ENCODE measurements at regions of chr3 and their contacts with region 1.

Region 1: DNA sequence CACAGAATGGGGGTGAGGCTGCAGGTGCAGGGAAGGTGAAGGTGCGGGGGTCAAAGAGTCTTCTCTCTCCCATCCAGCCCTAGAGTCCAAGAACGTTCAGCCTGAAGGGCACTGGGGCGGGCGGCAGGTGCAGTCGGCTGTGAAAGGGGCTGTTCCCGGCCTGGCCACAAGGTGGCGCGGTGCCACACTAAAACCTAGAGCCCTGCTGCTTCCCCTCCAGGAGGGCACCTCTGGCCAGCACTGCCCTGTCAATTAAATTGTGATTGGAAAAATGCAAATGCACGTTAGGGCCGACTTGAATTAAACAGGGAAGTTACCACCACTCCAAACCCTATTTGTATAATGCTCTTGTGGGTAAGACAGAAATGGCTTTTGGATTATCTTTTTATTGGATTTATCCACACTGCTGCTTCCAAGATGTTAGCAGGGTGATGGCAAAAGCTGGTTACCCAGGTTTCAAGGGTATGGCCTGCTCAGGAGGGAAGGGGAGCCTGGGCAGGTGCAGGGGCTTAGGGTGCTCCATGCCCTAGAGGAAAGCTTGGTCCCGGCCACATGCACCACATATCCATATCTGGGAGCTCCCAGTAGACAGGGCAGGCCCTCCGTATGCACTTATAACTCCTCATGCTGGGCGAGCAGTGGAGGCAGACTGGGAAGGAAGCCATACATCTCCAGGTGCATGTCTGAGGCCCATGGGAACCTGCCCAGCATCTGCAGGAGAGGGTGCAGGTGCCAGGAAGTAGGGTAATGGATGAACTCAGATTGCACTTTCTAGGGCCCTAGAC is 119.8 kb downstream of the ADCY5 start:
- DNase-seq: peak; percentile 85
- H3K4me3 Mint-ChIP-seq: no peak overlapping the region
- H3K27ac Mint-ChIP-seq: no peak overlapping the region
- H3K4me1 Mint-ChIP-seq: no peaks in the 10 kb centered on the region
- H3K27me3 Mint-ChIP-seq: peaks cover 53% of the 10 kb centered on the region
- CTCF ChIP-seq: peak; percentile 83

Region 2: GRCh38 chr3:123019591-123019990 is 309.5 kb before region 1 on chr3:
- CTCF ChIA-PET with region 1: no interaction called
- intact Hi-C with region 1: no loop called
- DNase-seq: no peak
- H3K4me3 Mint-ChIP-seq: no peak overlapping the region
- H3K27ac Mint-ChIP-seq: no peak overlapping the region
- H3K4me1 Mint-ChIP-seq: no peaks in the 10 kb centered on the region
- H3K27me3 Mint-ChIP-seq: peaks cover 81% of the 10 kb centered on the region
- CTCF ChIP-seq: no peak

Region 3: DNA sequence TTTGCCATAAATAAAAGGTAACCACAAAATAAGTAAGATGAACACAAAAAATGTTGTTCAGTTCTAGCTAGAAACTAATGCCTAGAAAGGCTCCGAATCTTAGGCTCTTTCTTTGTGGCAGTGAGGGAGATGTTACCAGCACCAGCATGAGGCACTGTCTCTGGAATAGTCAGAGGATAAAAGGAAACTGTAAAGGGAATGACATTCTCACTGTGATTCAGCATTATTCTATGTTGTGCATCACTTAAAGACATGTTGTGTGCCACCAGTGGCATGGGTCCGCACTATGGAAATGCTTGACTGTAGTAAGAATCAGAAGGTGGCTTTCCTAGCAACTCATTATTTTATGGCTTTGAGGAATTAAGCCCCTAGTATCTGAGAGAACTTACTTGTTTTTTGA is 56.5 kb before region 1 on chr3:
- CTCF ChIA-PET with region 1: no interaction called
- intact Hi-C with region 1: no loop called
- DNase-seq: no peak
- H3K4me3 Mint-ChIP-seq: no peak overlapping the region
- H3K27ac Mint-ChIP-seq: no peak overlapping the region
- H3K4me1 Mint-ChIP-seq: peaks cover 21% of the 10 kb centered on the region
- H3K27me3 Mint-ChIP-seq: no peaks in the 10 kb centered on the region
- CTCF ChIP-seq: no peak

Region 4: DNA sequence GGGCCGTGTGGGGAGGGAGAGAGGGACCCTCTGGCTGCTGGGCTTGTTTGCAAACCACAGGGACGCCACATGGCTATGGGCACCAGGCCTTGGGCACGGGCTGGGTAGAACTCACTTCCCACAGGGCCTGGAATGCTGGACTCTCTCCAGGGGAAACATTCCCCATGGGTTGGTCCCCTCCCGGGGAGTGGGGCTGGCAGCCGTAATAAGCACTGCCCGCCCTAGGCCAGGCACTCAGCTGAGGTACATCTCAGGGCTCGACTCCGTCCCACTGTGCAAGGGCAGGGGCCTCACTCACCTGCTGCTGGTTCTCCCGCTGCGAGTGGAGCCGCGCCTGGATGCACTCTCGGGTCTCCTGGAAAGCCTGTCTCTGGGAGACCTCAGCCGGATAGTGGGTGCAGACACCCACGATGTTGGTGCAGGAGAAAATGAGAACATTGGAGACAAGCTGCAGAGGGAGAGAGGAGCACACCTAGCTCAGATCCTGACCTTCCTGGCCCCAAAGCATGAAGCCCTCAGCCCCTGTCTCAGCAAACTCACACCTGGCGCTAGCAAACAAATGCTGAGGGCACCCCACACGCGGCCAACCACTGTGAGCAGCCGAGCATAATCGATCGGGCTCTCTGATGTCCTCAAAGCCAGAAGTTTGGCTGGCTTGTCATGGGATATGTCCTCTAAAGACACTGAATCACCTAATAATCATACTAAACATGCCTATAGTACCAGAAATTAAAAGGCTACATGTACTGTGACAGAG is 23.3 kb after region 1 on chr3:
- CTCF ChIA-PET with region 1: no interaction called
- intact Hi-C with region 1: no loop called
- DNase-seq: no peak
- H3K4me3 Mint-ChIP-seq: no peak overlapping the region
- H3K27ac Mint-ChIP-seq: no peak overlapping the region
- H3K4me1 Mint-ChIP-seq: no peaks in the 10 kb centered on the region
- H3K27me3 Mint-ChIP-seq: peaks cover 68% of the 10 kb centered on the region
- CTCF ChIP-seq: no peak

Region 5: GRCh38 chr3:123489400-123490004 is 160.5 kb after region 1 on chr3:
- CTCF ChIA-PET with region 1: interaction called, 14 read pairs
- intact Hi-C with region 1: loop called (anchors 1 kb)
- DNase-seq: peak; percentile 78
- H3K4me3 Mint-ChIP-seq: no peak overlapping the region
- H3K27ac Mint-ChIP-seq: no peak overlapping the region
- H3K4me1 Mint-ChIP-seq: no peaks in the 10 kb centered on the region
- H3K27me3 Mint-ChIP-seq: no peaks in the 10 kb centered on the region
- CTCF ChIP-seq: peak; percentile 76

Region 6: DNA sequence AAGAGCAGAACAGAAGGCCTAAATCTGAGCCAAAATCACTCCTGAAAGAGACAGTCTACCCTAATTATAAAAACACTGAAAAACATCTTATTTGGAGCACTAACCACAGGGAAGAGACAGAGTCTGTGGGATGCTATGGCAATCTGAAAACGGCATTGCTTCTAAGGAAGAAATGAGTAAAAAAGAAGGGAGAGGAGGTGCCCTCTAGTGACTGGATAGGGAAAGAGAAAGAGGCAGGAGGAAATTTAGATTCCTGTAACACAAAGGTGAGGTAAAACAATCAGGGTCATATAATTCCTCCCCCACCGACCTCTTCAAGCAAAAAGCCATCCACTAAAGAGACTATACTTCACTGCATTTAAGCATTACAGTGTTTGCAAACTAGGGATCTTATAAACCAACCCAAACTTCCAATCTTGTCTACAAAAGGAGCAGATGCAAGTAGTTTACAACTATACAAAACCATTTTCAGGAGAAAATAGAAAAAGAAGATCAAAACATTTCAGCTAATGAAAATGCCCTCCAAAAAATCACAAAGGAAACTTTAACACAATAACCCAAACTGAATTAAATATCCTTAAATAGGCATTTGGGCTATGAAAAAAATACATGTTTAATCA is 223.2 kb after region 1 on chr3:
- CTCF ChIA-PET with region 1: no interaction called
- intact Hi-C with region 1: loop called (anchors 5 kb)
- DNase-seq: no peak
- H3K4me3 Mint-ChIP-seq: no peak overlapping the region
- H3K27ac Mint-ChIP-seq: no peak overlapping the region
- H3K4me1 Mint-ChIP-seq: peaks cover 6% of the 10 kb centered on the region
- H3K27me3 Mint-ChIP-seq: no peaks in the 10 kb centered on the region
- CTCF ChIP-seq: no peak

Region 7: DNA sequence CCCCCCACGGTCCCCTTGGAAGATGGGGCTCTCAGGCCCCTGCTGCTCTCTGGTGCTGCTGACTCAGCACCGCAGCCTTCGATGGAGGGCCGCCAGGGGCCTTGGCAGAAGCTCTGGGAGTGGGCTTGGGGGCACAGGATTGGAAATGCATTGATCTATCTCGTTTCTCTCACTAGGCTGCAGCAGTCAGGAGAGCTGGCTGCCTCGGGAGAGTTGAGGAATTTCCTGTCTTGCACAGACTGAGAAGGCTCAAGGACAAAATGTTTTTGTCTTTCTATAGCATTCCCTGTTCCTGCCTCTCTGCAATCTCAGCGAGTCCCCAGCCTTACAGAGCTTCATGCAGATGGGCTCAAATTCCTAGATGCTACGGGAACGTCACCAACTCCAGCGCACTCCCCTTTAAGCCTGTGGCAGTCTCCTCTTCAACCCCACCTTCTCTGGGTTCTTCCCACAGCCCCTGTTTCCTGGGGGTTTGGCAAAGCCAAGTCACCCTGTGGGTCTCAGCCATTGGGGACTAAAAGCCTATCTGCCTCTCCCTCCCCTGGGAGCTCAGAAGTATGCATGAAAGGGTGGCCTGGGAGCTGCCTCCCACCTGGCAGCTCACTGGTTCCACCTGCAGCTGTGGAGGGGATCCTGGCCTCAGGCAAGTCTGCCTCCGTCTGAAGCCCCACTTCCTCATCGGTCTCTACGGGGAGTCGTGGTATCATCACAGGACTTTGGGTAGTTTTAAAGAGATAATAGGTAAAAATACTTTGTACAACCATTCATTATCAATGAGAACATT is 383.2 kb after region 1 on chr3:
- CTCF ChIA-PET with region 1: no interaction called
- intact Hi-C with region 1: no loop called
- DNase-seq: no peak
- H3K4me3 Mint-ChIP-seq: no peak overlapping the region
- H3K27ac Mint-ChIP-seq: no peak overlapping the region
- H3K4me1 Mint-ChIP-seq: no peaks in the 10 kb centered on the region
- H3K27me3 Mint-ChIP-seq: no peaks in the 10 kb centered on the region
- CTCF ChIP-seq: no peak